ENCODE measurements at regions of chr16 and their contacts with region 1.

Region 1: DNA sequence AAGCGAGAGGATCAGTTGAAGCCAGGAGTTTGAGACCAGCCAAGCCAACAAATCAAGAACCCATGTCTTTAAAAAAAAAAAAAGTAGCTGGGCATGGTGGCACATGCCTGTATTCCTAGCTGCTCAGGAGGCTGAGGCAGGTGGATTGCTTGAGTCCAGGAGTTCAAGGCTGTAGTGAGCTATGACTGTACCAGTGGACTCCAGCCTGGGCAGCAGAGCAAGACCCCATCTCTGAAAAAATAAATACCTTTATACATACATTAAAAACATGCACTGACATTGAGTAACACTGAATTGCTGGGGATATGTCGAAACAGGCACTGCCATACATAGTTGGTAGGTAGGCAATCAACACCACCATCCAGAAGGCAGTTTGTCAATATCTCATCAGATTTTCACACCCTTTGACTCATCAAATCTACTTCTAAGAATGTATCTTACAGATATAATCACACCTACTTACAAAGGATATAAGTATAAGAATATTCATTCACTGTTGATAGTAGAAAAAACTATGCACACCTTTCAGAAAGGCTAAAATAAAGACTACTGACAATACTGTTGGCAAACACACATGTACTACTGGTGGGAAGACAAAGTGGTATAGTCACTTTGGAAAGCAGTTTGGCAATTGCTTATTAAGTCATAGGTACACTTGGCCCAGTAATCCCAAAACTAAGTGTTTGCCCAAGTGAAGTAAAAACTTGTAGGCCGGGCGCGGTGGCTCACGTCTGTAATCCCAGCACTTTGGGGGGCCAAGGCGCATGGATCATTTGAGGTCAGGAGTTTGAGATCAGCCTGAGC is 6.4 kb upstream of the CEP20 start:
- DNase-seq: no peak
- ATAC-seq: no peak
- H3K4me3 ChIP-seq: no peak overlapping the region
- H3K27ac ChIP-seq: no peak overlapping the region
- H3K4me1 ChIP-seq: no peaks in the 10 kb centered on the region
- H3K27me3 ChIP-seq: no peaks in the 10 kb centered on the region
- CTCF ChIP-seq: no peak

Region 2: GRCh38 chr16:16014329-16015144 is 119.8 kb after region 1 on chr16:
- intact Hi-C with region 1: loop called in 1 of 2 experiments (anchors 5 kb)
- DNase-seq: peak; percentile 75 to 86
- ATAC-seq: peak; percentile 19 to 78 (median 48)
- H3K4me3 ChIP-seq: no peak overlapping the region
- H3K27ac ChIP-seq: peak overlapping the region; percentile 30
- H3K4me1 ChIP-seq: peaks cover 36% of the 10 kb centered on the region
- H3K27me3 ChIP-seq: no peaks in the 10 kb centered on the region
- CTCF ChIP-seq: no peak